ENCODE measurements at regions of chr5 and their contacts with region 1.

Region 1: GRCh38 chr5:7927466-7928375 is 58.8 kb downstream of the MTRR start:
- DNase-seq: peak; percentile 79
- H3K4me3 Mint-ChIP-seq: no peak overlapping the region
- H3K27ac Mint-ChIP-seq: no peak overlapping the region
- H3K4me1 Mint-ChIP-seq: no peaks in the 10 kb centered on the region
- H3K27me3 Mint-ChIP-seq: no peaks in the 10 kb centered on the region

Region 2: GRCh38 chr5:7518947-7519560 is 408.7 kb before region 1 on chr5:
- intact Hi-C with region 1: no loop called
- DNase-seq: no peak
- H3K4me3 Mint-ChIP-seq: no peak overlapping the region
- H3K27ac Mint-ChIP-seq: no peak overlapping the region
- H3K4me1 Mint-ChIP-seq: no peaks in the 10 kb centered on the region
- H3K27me3 Mint-ChIP-seq: no peaks in the 10 kb centered on the region

Region 3: GRCh38 chr5:7754992-7755596 is 172.6 kb before region 1 on chr5:
- intact Hi-C with region 1: no loop called
- DNase-seq: peak; percentile 80
- H3K4me3 Mint-ChIP-seq: no peak overlapping the region
- H3K27ac Mint-ChIP-seq: no peak overlapping the region
- H3K4me1 Mint-ChIP-seq: peaks cover 5% of the 10 kb centered on the region
- H3K27me3 Mint-ChIP-seq: peaks cover 11% of the 10 kb centered on the region

Region 4: DNA sequence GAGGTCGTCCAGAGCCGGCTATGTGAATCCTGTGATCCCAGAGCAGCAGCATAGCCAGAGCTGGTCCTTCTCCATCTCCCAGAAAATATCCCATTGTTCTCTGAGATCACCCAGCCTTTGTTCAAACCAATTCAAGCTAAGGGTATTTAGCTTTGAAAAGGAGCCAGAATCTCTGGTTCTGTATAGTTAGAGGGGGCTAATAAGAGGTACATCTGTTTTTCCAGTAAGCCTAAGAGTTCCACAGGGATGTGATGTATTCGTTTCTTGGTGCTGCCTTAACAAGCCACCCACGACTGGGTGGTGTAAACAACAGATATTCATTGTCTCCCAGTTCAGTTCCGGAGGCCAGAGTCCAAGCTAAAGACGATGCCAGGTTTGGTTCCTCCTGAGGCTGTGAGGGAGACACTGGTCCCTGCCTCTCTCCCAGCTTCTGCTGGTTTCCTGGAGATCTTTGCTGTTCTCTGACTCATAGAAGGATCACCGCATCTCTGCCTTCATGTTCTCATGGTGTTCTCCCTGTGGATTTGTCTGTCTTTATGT is 286.1 kb after region 1 on chr5:
- intact Hi-C with region 1: no loop called
- DNase-seq: no peak
- H3K4me3 Mint-ChIP-seq: no peak overlapping the region
- H3K27ac Mint-ChIP-seq: no peak overlapping the region
- H3K4me1 Mint-ChIP-seq: no peaks in the 10 kb centered on the region
- H3K27me3 Mint-ChIP-seq: no peaks in the 10 kb centered on the region

Region 5: GRCh38 chr5:9207817-9208418 is 1280.2 kb after region 1 on chr5:
- intact Hi-C with region 1: loop called (anchors 5 kb)
- DNase-seq: no peak
- H3K4me3 Mint-ChIP-seq: no peak overlapping the region
- H3K27ac Mint-ChIP-seq: no peak overlapping the region
- H3K4me1 Mint-ChIP-seq: no peaks in the 10 kb centered on the region
- H3K27me3 Mint-ChIP-seq: no peaks in the 10 kb centered on the region

Region 6: GRCh38 chr5:9544502-9545135 is 1616.9 kb after region 1 on chr5:
- intact Hi-C with region 1: loop called (anchors 10 kb)
- DNase-seq: peak; percentile 76
- H3K4me3 Mint-ChIP-seq: peak overlapping the region; percentile 44
- H3K27ac Mint-ChIP-seq: no peak overlapping the region
- H3K4me1 Mint-ChIP-seq: no peaks in the 10 kb centered on the region
- H3K27me3 Mint-ChIP-seq: peaks cover 23% of the 10 kb centered on the region